ENCODE measurements at regions of chr7 and their contacts with region 1.

Region 1: DNA sequence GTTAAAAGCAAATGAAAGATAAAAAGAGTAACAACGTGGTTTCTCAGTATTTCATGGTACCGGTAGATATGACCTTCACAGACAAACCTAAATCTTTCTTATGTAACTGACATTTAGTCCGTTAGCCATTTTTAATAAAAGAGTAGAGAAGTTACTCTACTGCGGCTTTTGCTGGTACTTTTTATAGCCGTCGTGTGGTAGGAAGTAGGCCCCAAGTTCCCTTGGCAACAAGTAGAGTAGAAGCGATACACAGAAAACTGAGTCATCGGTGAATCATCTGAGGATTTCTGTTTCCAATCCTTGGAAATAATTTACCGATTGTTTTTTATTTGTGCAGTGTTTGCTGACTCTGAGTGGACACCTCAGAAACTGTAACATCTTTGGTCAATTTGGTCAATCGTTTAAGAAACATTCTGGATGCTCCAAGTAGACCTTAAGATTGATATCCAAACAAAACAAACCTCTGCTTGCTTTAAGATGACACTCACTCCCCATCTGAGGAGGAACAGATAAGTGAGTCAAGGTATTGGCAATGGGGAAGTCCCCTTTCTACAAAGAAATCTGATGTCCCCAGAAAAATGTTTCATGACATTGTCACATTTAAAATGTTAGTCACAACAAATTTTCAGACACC is 63.9 kb upstream of the AHR start:
- DNase-seq: peak; percentile 84
- H3K4me3 Mint-ChIP-seq: peak overlapping the region; percentile 69
- H3K27ac Mint-ChIP-seq: peak overlapping the region; percentile 89
- H3K4me1 Mint-ChIP-seq: peaks cover 46% of the 10 kb centered on the region
- H3K27me3 Mint-ChIP-seq: no peaks in the 10 kb centered on the region

Region 2: GRCh38 chr7:16645593-16646471 is 588.7 kb before region 1 on chr7 and contains the starts of genes ANKMY2 and BZW2:
- CTCF ChIA-PET with region 1: no interaction called
- intact Hi-C with region 1: loop called (anchors 1 kb)
- DNase-seq: peak; percentile 94
- H3K4me3 Mint-ChIP-seq: peak within 1 kb of the TSS; percentile 97
- H3K27ac Mint-ChIP-seq: peak within 1 kb of the TSS; percentile 95
- H3K4me1 Mint-ChIP-seq: peaks cover 53% of the 10 kb centered on the region
- H3K27me3 Mint-ChIP-seq: no peaks in the 10 kb centered on the region
- total RNA-seq, gene ANKMY2: 4.6 to 4.7 TPM
- total RNA-seq, gene BZW2: 118 to 122 TPM

Region 3: GRCh38 chr7:17134786-17135185 is 99.7 kb before region 1 on chr7:
- CTCF ChIA-PET with region 1: no interaction called
- intact Hi-C with region 1: loop called (anchors 1 kb)
- DNase-seq: peak; percentile 38
- H3K4me3 Mint-ChIP-seq: no peak overlapping the region
- H3K27ac Mint-ChIP-seq: peak overlapping the region; percentile 46
- H3K4me1 Mint-ChIP-seq: peaks cover 54% of the 10 kb centered on the region
- H3K27me3 Mint-ChIP-seq: no peaks in the 10 kb centered on the region

Region 4: GRCh38 chr7:17185690-17186070 is 48.8 kb before region 1 on chr7:
- CTCF ChIA-PET with region 1: no interaction called
- intact Hi-C with region 1: loop called (anchors 2 kb)
- DNase-seq: no peak
- H3K4me3 Mint-ChIP-seq: no peak overlapping the region
- H3K27ac Mint-ChIP-seq: no peak overlapping the region
- H3K4me1 Mint-ChIP-seq: peaks cover 14% of the 10 kb centered on the region
- H3K27me3 Mint-ChIP-seq: no peaks in the 10 kb centered on the region

Region 5: DNA sequence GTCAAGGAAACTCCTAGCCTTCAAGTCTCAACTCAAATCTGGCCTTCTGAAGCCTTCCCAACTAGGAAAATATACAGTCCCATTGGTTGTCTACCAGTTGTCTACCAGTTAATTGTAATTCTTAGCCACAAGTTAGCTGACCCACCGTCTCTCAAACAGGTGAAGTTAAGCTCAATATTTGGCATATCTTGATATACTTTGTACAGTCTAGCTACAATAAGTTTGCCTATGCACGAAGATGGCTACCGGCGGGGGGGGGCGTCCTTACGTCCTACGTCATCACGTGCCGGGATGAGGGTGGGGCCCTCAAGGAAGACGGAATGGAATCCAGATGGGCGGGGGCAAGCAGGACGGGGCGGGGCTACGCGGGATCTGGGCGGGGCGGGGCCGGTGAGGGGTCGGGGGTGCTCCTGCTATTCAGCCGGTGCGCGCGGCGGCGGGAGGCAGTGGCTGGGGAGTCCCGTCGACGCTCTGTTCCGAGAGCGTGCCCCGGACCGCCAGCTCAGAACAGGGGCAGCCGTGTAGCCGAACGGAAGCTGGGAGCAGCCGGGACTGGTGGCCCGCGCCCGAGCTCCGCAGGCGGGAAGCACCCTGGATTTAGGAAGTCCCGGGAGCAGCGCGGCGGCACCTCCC is 63.8 kb after region 1 on chr7 and contains the start of gene AHR:
- CTCF ChIA-PET with region 1: interaction called, 3 read pairs
- intact Hi-C with region 1: loop called (anchors 1 kb)
- DNase-seq: peak; percentile 97
- H3K4me3 Mint-ChIP-seq: peak within 1 kb of the TSS; percentile 92
- H3K27ac Mint-ChIP-seq: peak within 1 kb of the TSS; percentile 91
- H3K4me1 Mint-ChIP-seq: peaks cover 25% of the 10 kb centered on the region
- H3K27me3 Mint-ChIP-seq: no peaks in the 10 kb centered on the region
- total RNA-seq, gene AHR: 24.5 to 27.5 TPM

Region 6: GRCh38 chr7:17492437-17492836 is 257.9 kb after region 1 on chr7:
- CTCF ChIA-PET with region 1: no interaction called
- intact Hi-C with region 1: loop called (anchors 5 kb)
- DNase-seq: no peak
- H3K4me3 Mint-ChIP-seq: no peak overlapping the region
- H3K27ac Mint-ChIP-seq: no peak overlapping the region
- H3K4me1 Mint-ChIP-seq: peaks cover 28% of the 10 kb centered on the region
- H3K27me3 Mint-ChIP-seq: no peaks in the 10 kb centered on the region

Region 7: DNA sequence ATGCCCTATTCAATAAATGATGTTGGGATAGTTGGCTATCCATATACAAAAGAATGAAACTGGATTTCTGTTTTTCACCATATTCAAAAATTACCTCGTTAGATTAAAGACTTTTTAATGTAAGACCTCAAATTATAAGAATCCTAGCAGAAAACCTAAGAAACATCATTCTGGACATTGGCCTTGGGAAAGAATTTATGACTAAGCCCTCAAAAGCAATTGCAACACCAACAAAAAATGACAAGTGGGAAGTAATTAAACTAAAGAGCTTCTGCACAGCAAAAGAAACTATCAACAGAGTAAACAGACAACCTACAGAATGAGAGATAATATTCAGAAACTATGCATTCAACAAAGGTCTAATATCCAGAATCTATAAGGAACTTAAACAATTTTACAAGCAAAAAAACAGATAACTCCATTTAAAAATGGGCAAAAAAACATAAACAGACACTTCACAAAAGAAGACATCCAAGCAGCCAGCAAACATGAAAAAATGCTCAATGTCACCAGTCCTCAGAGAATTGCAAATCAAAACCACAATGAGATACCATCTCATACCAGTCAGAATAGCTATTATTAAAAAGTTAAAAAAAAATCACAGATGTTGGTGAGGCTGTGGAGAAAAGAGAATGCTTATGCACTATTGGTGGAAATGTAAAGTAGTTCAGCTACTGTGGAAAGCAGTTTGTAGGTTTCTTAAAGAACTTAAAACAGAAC is 373.8 kb after region 1 on chr7:
- CTCF ChIA-PET with region 1: no interaction called
- intact Hi-C with region 1: no loop called
- DNase-seq: no peak
- H3K4me3 Mint-ChIP-seq: no peak overlapping the region
- H3K27ac Mint-ChIP-seq: no peak overlapping the region
- H3K4me1 Mint-ChIP-seq: no peaks in the 10 kb centered on the region
- H3K27me3 Mint-ChIP-seq: peaks cover 4% of the 10 kb centered on the region

Measured in activated naive CD4-positive, alpha-beta T cell treated with anti-CD3 and anti-CD28 coated beads for 36 hours (primary cell).